H1 (cell line): ENCODE measurements at regions of chr18 and their contacts with region 1.

Region 1: GRCh38 chr18:46660955-46661749 is 4.1 kb upstream of the LOXHD1 start:
- DNase-seq: peak in 1 of 2 experiments; percentile 65
- H3K4me3 ChIP-seq: no peak overlapping the region
- H3K27ac ChIP-seq: no peak overlapping the region
- H3K4me1 ChIP-seq: peaks cover 0 to 9% (median 1%) of the 10 kb centered on the region in 4 experiments; a peak in 1 of 7 replicates
- H3K27me3 ChIP-seq: no peaks in the 10 kb centered on the region
- CTCF ChIP-seq: no peak
- EP300 ChIP-seq: no peak
- POLR2A ChIP-seq: no peak
- RAD21 ChIP-seq: no peak

Region 2: GRCh38 chr18:46173393-46174341 is 487.5 kb before region 1 on chr18:
- CTCF ChIA-PET with region 1: interaction called, 12 read pairs
- POLR2A ChIA-PET with region 1: interaction called, 4 read pairs
- DNase-seq: peak; percentile 92 to 98
- H3K4me3 ChIP-seq: peak overlapping the region; percentile 71 to 91 (median 81)
- H3K27ac ChIP-seq: peak overlapping the region; percentile 88
- H3K4me1 ChIP-seq: peaks cover 0 to 2% (median 0%) of the 10 kb centered on the region in 4 experiments; a peak in 1 of 7 replicates
- H3K27me3 ChIP-seq: no peaks in the 10 kb centered on the region
- CTCF ChIP-seq: peak; percentile 91 to 94 (median 94)
- EP300 ChIP-seq: no peak
- POLR2A ChIP-seq: peak; percentile 40 to 61
- RAD21 ChIP-seq: peak; percentile 68 to 72

Region 3: GRCh38 chr18:46411867-46412690 is 249.1 kb before region 1 on chr18:
- CTCF ChIA-PET with region 1: interaction called, 12 read pairs
- POLR2A ChIA-PET with region 1: no interaction called
- DNase-seq: no peak
- H3K4me3 ChIP-seq: no peak overlapping the region; a peak in 1 of 8 replicates
- H3K27ac ChIP-seq: no peak overlapping the region
- H3K4me1 ChIP-seq: peaks cover 20 to 38% (median 26%) of the 10 kb centered on the region in 4 experiments
- H3K27me3 ChIP-seq: no peaks in the 10 kb centered on the region; a peak in 2 of 7 replicates
- CTCF ChIP-seq: no peak
- EP300 ChIP-seq: no peak
- POLR2A ChIP-seq: no peak
- RAD21 ChIP-seq: no peak

Region 4: GRCh38 chr18:46547520-46547919 is 113.6 kb before region 1 on chr18:
- CTCF ChIA-PET with region 1: interaction called, 148 read pairs
- POLR2A ChIA-PET with region 1: no interaction called
- DNase-seq: no peak
- H3K4me3 ChIP-seq: no peak overlapping the region
- H3K27ac ChIP-seq: no peak overlapping the region
- H3K4me1 ChIP-seq: peaks cover 0 to 3% (median 0%) of the 10 kb centered on the region in 4 experiments; a peak in 1 of 7 replicates
- H3K27me3 ChIP-seq: no peaks in the 10 kb centered on the region
- CTCF ChIP-seq: no peak
- EP300 ChIP-seq: no peak
- POLR2A ChIP-seq: no peak
- RAD21 ChIP-seq: no peak

Region 5: GRCh38 chr18:46563317-46563716 is 97.8 kb before region 1 on chr18:
- CTCF ChIA-PET with region 1: interaction called, 32 read pairs
- POLR2A ChIA-PET with region 1: interaction called, 4 read pairs
- DNase-seq: peak in 1 of 2 experiments; percentile 3
- H3K4me3 ChIP-seq: no peak overlapping the region; a peak in 1 of 8 replicates
- H3K27ac ChIP-seq: no peak overlapping the region
- H3K4me1 ChIP-seq: peaks cover 2 to 7% (median 5%) of the 10 kb centered on the region in 4 experiments; a peak in 6 of 7 replicates
- H3K27me3 ChIP-seq: no peaks in the 10 kb centered on the region
- CTCF ChIP-seq: no peak
- EP300 ChIP-seq: no peak
- POLR2A ChIP-seq: no peak
- RAD21 ChIP-seq: no peak

Region 6: DNA sequence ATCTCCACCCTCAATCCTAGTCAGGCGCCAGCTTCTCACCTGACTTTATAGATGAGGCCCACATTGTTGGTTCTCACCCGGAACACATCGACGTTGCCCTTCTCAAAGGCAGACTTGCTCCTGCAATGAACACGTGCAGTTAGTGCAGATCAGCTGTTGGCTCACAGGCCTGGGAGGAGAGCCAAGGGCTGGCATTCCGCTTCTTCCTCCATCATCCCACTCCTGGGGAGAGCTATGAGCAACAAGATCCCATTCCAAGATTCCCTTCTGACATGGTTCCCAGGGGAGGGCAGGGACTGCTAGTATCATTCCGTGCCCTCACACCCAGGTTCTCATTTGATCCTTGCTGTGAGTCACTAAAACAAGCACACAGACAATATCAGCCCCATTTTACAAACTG is 19.2 kb before region 1 on chr18:
- CTCF ChIA-PET with region 1: interaction called, 47 read pairs
- POLR2A ChIA-PET with region 1: interaction called, 4 read pairs
- DNase-seq: no peak
- H3K4me3 ChIP-seq: no peak overlapping the region
- H3K27ac ChIP-seq: no peak overlapping the region
- H3K4me1 ChIP-seq: no peaks in the 10 kb centered on the region
- H3K27me3 ChIP-seq: no peaks in the 10 kb centered on the region
- CTCF ChIP-seq: no peak
- EP300 ChIP-seq: no peak
- POLR2A ChIP-seq: no peak
- RAD21 ChIP-seq: no peak

Region 7: GRCh38 chr18:46672062-46672970 is 11.2 kb after region 1 on chr18:
- CTCF ChIA-PET with region 1: interaction called, 38 read pairs
- POLR2A ChIA-PET with region 1: no interaction called
- DNase-seq: no peak
- H3K4me3 ChIP-seq: no peak overlapping the region
- H3K27ac ChIP-seq: no peak overlapping the region
- H3K4me1 ChIP-seq: peaks cover 0 to 10% (median 3%) of the 10 kb centered on the region in 4 experiments; a peak in 5 of 7 replicates
- H3K27me3 ChIP-seq: no peaks in the 10 kb centered on the region; a peak in 1 of 7 replicates
- CTCF ChIP-seq: no peak
- EP300 ChIP-seq: no peak
- POLR2A ChIP-seq: no peak
- RAD21 ChIP-seq: no peak